ENCODE measurements at regions of chr5 and their contacts with region 1.

Region 1: GRCh38 chr5:7868773-7869473 is at the starts of genes FASTKD3 and MTRR:
- DNase-seq: peak; percentile 91
- H3K4me3 Mint-ChIP-seq: peak within 1 kb of the TSS; percentile 96
- H3K27ac Mint-ChIP-seq: peak within 1 kb of the TSS; percentile 82
- H3K4me1 Mint-ChIP-seq: peaks cover 64% of the 10 kb centered on the region
- H3K27me3 Mint-ChIP-seq: no peaks in the 10 kb centered on the region
- total RNA-seq, gene FASTKD3: 4.0 to 7.7 TPM
- total RNA-seq, gene MTRR: 34.0 to 35.1 TPM

Region 2: DNA sequence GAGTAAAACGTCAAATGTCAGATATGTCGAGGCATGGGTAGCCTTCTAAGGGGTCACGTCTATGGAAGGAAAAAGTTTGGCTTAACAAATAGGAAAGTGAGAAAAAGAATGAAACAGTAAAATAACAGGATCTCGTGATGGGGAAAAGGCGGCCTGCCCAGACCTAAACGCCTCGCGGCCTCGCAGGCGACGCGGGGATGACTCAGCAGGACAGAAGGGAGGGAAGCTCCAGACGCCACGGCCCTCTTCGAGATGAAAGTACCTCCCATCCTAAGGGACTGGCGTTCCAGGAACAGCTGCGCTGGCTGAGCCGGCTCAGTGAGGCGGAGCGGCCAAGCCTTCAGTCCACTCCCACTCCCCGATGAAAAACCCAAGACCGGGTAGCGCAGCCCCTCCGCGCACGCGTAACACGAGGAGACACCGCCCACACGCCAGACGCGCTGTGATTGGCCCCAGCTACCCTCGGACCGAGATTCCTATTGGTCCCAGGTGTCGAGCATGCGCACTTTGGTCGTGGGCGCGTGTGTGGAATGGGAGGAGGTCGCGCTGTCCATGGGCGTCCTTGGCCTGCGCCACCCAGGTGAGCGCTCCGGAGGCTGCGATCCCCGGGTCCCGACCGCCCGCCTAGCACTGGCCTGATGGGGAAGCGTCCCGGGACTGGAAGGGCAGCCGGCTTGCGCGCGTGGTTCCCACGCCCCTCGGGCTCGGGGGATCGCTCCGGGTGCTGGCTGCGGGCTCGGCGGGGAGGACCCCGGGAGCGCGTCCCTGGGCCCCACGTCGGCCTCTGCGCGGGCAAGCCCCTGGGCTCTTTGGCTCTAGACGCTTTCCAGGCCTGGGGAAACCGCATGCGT is 588.5 kb after region 1 on chr5:
- CTCF ChIA-PET with region 1: no interaction called
- intact Hi-C with region 1: loop called (anchors 10 kb)
- DNase-seq: peak; percentile 77
- H3K4me3 Mint-ChIP-seq: peak overlapping the region; percentile 77
- H3K27ac Mint-ChIP-seq: peak overlapping the region; percentile 75
- H3K4me1 Mint-ChIP-seq: peaks cover 4% of the 10 kb centered on the region
- H3K27me3 Mint-ChIP-seq: peaks cover 2% of the 10 kb centered on the region